Activated CD4-positive, alpha-beta T cell treated with anti-CD3 and anti-CD28 coated beads for 36 hours (primary cell): ENCODE measurements at regions of chr14 and their contacts with region 1.

Region 1: GRCh38 chr14:65927931-65928356 is 515.4 kb downstream of the FUT8 start:
- DNase-seq: peak; percentile 93
- ATAC-seq: peak; percentile 96
- H3K4me3 Mint-ChIP-seq: no peak overlapping the region
- H3K27ac Mint-ChIP-seq: peak overlapping the region; percentile 59
- H3K4me1 Mint-ChIP-seq: peaks cover 39% of the 10 kb centered on the region
- H3K27me3 Mint-ChIP-seq: peaks cover 5% of the 10 kb centered on the region

Region 2: GRCh38 chr14:65377590-65377989 is 550.4 kb before region 1 on chr14:
- CTCF ChIA-PET with region 1: no interaction called
- POLR2A ChIA-PET with region 1: no interaction called
- intact Hi-C with region 1: no loop called
- DNase-seq: no peak
- ATAC-seq: no peak
- H3K4me3 Mint-ChIP-seq: no peak overlapping the region
- H3K27ac Mint-ChIP-seq: no peak overlapping the region
- H3K4me1 Mint-ChIP-seq: peaks cover 8% of the 10 kb centered on the region
- H3K27me3 Mint-ChIP-seq: no peaks in the 10 kb centered on the region

Region 3: DNA sequence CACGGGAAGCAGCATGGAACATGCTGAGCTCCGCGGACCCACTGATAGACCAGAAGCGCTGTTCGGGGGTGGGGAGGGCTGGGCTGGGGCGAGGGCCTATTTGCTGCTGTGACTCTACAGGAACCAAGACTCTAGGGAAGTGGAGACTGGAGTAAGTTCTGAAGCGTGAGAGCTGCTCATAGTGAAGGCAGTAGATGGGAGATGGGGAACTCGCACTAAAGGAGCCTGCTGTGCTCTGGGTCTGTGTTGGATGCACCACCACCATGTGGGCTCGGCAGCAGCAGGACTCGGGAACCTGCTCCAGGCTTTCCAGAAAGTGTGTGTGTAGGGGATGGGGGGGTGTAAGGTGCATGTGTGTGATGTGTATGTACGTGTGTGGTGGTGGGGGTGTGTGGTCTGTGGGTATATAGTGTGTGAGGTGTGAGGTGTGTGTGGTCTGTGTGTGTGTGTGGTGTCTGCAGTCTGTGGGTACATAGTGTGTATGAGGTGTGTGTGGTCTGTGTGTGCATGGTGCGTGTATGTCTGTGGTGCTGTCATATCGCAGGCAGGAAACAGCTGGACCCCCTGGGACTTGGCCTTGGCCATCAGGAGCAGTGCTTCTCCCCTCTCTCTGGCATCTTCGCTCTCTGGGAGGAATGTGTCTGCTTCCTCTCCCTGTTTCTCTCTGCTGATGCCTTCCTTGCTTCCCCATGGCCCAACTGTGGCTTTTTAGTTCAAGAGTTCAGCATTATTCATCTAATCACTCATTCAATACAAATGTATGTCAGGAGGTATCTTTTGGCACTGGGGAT is 136.6 kb before region 1 on chr14:
- CTCF ChIA-PET with region 1: no interaction called
- POLR2A ChIA-PET with region 1: no interaction called
- intact Hi-C with region 1: no loop called
- DNase-seq: peak; percentile 30
- ATAC-seq: peak; percentile 49
- H3K4me3 Mint-ChIP-seq: no peak overlapping the region
- H3K27ac Mint-ChIP-seq: no peak overlapping the region
- H3K4me1 Mint-ChIP-seq: no peaks in the 10 kb centered on the region
- H3K27me3 Mint-ChIP-seq: peaks cover 4% of the 10 kb centered on the region

Region 4: GRCh38 chr14:65879248-65880009 is 48.5 kb before region 1 on chr14:
- CTCF ChIA-PET with region 1: no interaction called
- POLR2A ChIA-PET with region 1: no interaction called
- intact Hi-C with region 1: loop called in 1 of 2 experiments (anchors 2 kb)
- DNase-seq: peak; percentile 18
- ATAC-seq: peak; percentile 94
- H3K4me3 Mint-ChIP-seq: no peak overlapping the region
- H3K27ac Mint-ChIP-seq: peak overlapping the region; percentile 61
- H3K4me1 Mint-ChIP-seq: peaks cover 22% of the 10 kb centered on the region
- H3K27me3 Mint-ChIP-seq: no peaks in the 10 kb centered on the region

Region 5: DNA sequence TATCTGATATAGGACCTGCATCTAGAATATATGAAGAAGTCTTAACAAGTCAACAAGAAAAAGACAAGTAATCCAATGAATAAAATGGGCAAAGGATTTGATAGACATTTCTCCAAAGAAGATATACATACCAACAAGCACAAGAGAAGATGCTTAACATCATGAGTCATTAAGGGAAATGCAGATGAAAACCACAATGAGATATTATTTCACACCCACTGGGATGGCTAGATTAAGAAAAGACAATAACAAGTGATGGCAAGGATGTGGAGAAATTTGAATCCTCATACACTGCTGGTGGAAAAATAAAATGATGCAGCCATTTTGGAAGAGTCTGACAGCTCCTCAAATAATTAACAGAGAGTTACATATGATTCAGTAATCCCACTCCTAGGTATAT is 12.8 kb before region 1 on chr14:
- CTCF ChIA-PET with region 1: interaction called, 12 read pairs
- POLR2A ChIA-PET with region 1: no interaction called
- intact Hi-C with region 1: no loop called
- DNase-seq: no peak
- ATAC-seq: peak; percentile 68
- H3K4me3 Mint-ChIP-seq: no peak overlapping the region
- H3K27ac Mint-ChIP-seq: no peak overlapping the region
- H3K4me1 Mint-ChIP-seq: peaks cover 16% of the 10 kb centered on the region
- H3K27me3 Mint-ChIP-seq: no peaks in the 10 kb centered on the region

Region 6: GRCh38 chr14:65940056-65940733 is 12.3 kb after region 1 on chr14:
- CTCF ChIA-PET with region 1: interaction called, 11 read pairs
- POLR2A ChIA-PET with region 1: no interaction called
- intact Hi-C with region 1: no loop called
- DNase-seq: peak; percentile 53
- ATAC-seq: peak; percentile 61
- H3K4me3 Mint-ChIP-seq: no peak overlapping the region
- H3K27ac Mint-ChIP-seq: no peak overlapping the region
- H3K4me1 Mint-ChIP-seq: peaks cover 28% of the 10 kb centered on the region
- H3K27me3 Mint-ChIP-seq: no peaks in the 10 kb centered on the region

Region 7: GRCh38 chr14:65949711-65950516 is 22.0 kb after region 1 on chr14:
- CTCF ChIA-PET with region 1: interaction called, 17 read pairs
- POLR2A ChIA-PET with region 1: no interaction called
- intact Hi-C with region 1: loop called (anchors 1 kb)
- DNase-seq: peak; percentile 77
- ATAC-seq: peak; percentile 92
- H3K4me3 Mint-ChIP-seq: no peak overlapping the region
- H3K27ac Mint-ChIP-seq: peak overlapping the region; percentile 63
- H3K4me1 Mint-ChIP-seq: peaks cover 35% of the 10 kb centered on the region
- H3K27me3 Mint-ChIP-seq: peaks cover 12% of the 10 kb centered on the region